Dendritic cell treated with granulocyte-macrophage colony-stimulating factor and Interleukin-4, amounts not matched to agents 40 ng/mL and 50 ng/mL, for 4 days (primary cell): ENCODE measurements at regions of chr4 and their contacts with region 1.

Region 1: GRCh38 chr4:112075129-112075753 is 70.0 kb upstream of the FAM241A start:
- H3K4me3 Mint-ChIP-seq: no peak overlapping the region
- H3K27ac Mint-ChIP-seq: no peak overlapping the region
- H3K4me1 Mint-ChIP-seq: peaks cover 14% of the 10 kb centered on the region
- H3K27me3 Mint-ChIP-seq: peaks cover 2% of the 10 kb centered on the region

Region 2: GRCh38 chr4:112604589-112604988 is 529.3 kb after region 1 on chr4:
- intact Hi-C with region 1: loop called (anchors 10 kb)
- H3K4me3 Mint-ChIP-seq: no peak overlapping the region
- H3K27ac Mint-ChIP-seq: no peak overlapping the region
- H3K4me1 Mint-ChIP-seq: no peaks in the 10 kb centered on the region
- H3K27me3 Mint-ChIP-seq: no peaks in the 10 kb centered on the region

Region 3: DNA sequence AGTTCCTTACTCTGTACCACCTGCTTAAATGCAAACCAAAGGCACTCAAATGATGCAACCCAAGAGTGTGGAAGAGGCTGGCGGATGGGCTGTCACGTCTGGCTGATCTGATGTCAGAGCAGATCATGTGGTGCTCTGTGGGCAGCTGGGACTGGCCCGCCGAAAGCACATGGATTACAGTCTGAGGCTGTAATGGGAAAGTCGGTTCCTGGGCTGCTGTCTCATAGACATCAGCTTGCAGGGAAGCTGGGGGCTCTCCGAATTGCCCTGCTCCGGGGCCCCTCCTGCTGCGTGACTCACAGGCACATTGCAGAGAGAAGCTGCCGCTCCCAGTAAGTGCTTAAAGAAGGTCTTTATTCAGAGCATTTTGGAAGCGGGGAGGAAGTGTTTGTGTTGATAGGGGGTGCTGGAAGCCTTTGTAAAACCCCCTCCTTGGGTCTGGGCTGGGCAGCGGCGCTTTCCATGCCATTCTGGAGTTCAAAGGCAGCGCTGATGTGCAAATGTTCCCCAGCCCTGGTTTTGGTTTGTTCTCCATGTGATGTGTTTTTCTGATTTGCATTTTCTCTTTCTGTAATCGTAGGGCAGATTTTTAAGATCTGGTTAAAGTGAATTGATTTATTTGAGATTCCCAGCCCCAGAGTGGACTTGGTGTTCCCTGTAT is 742.8 kb after region 1 on chr4:
- intact Hi-C with region 1: no loop called
- H3K4me3 Mint-ChIP-seq: peak overlapping the region; percentile 49
- H3K27ac Mint-ChIP-seq: no peak overlapping the region
- H3K4me1 Mint-ChIP-seq: peaks cover 10% of the 10 kb centered on the region
- H3K27me3 Mint-ChIP-seq: peaks cover 18% of the 10 kb centered on the region